OCI-LY7 (cell line): ENCODE measurements at regions of chr12 and their contacts with region 1.

Region 1: GRCh38 chr12:123056053-123056741 is 75.7 kb downstream of the ARL6IP4 start:
- DNase-seq: no peak
- H3K4me3 ChIP-seq: no peak overlapping the region
- H3K27ac ChIP-seq: no peak overlapping the region
- H3K4me1 ChIP-seq: peaks cover 40% of the 10 kb centered on the region
- CTCF ChIP-seq: no peak

Region 2: DNA sequence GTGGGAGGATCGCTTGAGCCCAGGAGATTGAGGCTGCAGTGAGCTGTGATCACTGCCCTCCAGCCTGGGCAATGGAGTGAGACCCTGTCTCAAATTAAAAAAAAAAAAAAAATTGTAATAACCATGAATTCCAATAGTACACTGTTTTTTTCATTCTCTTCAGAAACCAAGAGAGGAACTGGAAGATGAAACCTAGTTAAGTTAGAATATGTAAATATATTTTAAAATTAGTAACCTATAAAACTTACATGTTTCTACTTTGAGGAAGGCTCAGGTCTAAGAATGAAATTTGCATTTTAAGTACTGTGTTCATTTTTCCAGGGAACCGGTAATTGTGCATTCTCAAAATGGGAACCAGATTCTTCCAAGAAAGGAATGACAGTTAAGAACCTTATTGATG is 510.3 kb before region 1 on chr12:
- CTCF ChIA-PET with region 1: no interaction called
- POLR2A ChIA-PET with region 1: no interaction called
- intact Hi-C with region 1: no loop called
- DNase-seq: no peak
- H3K4me3 ChIP-seq: no peak overlapping the region
- H3K27ac ChIP-seq: no peak overlapping the region
- H3K4me1 ChIP-seq: peaks cover 20% of the 10 kb centered on the region
- CTCF ChIP-seq: no peak

Region 3: GRCh38 chr12:122980183-122981046 is 75.8 kb before region 1 on chr12 and contains the start of gene ARL6IP4:
- CTCF ChIA-PET with region 1: no interaction called
- POLR2A ChIA-PET with region 1: no interaction called
- intact Hi-C with region 1: loop called (anchors 5 kb)
- DNase-seq: peak; percentile 85
- H3K4me3 ChIP-seq: peak within 1 kb of the TSS; percentile 95
- H3K27ac ChIP-seq: peak within 1 kb of the TSS; percentile 72
- H3K4me1 ChIP-seq: peaks cover 56% of the 10 kb centered on the region
- CTCF ChIP-seq: no peak; the same call in 1 of the 2 replicates
- total RNA-seq, gene ARL6IP4: 263 and 329 TPM in 2 replicates